ENCODE measurements at regions of chr1 and their contacts with region 1.

Region 1: DNA sequence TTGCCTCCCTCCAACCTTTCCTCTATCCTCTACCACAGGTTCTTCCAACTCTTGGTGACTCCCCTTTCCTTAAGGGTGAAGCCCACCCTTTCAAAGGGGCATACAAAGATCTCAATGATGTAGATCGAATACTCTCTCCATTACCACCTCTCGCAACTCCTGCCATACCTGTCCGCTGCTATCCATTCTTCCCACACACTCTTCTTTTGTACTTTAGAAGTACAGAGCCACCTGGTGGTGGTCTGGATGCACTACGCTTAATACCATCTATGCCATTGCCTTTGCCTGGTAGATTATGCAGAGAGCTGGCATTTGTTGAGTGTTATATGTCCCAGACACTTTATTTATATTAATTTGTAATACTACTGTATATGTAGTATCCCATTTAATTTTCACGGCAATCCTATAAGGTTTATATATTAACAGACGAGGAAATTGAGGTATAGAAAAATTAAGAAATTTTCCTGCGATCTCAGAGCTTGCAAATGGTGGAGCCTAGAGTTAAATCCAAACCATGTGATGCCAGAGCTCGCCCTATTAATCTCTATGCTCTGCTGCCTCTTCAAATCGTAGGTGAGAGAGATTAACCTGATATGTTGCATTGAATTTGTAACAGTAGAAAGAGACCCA is 22.9 kb downstream of the TSHB start:
- DNase-seq: peak; percentile 62
- ATAC-seq: peak; percentile 99
- H3K4me3 ChIP-seq: no peak overlapping the region
- H3K27ac ChIP-seq: no peak overlapping the region
- H3K4me1 ChIP-seq: no peaks in the 10 kb centered on the region
- H3K27me3 ChIP-seq: no peaks in the 10 kb centered on the region
- CTCF ChIP-seq: peak; percentile 61 to 82 (median 80); a peak in 5 of 6 replicates
- POLR2A ChIP-seq: no peak
- RAD21 ChIP-seq: peak; percentile 66

Region 2: GRCh38 chr1:114495486-114495885 is 557.1 kb before region 1 on chr1:
- CTCF ChIA-PET with region 1: no interaction called
- POLR2A ChIA-PET with region 1: no interaction called
- RAD21 ChIA-PET with region 1: no interaction called
- intact Hi-C with region 1: no loop called
- DNase-seq: no peak
- ATAC-seq: no peak
- H3K4me3 ChIP-seq: no peak overlapping the region
- H3K27ac ChIP-seq: no peak overlapping the region
- H3K4me1 ChIP-seq: no peaks in the 10 kb centered on the region
- H3K27me3 ChIP-seq: no peaks in the 10 kb centered on the region
- CTCF ChIP-seq: no peak
- POLR2A ChIP-seq: no peak
- RAD21 ChIP-seq: no peak

Region 3: GRCh38 chr1:115041654-115042053 is 10.9 kb before region 1 on chr1:
- CTCF ChIA-PET with region 1: interaction called, 35 read pairs
- POLR2A ChIA-PET with region 1: interaction called, 3 read pairs
- RAD21 ChIA-PET with region 1: interaction called in 1 of 2 experiments, 6 read pairs
- intact Hi-C with region 1: no loop called
- DNase-seq: peak; percentile 46
- ATAC-seq: peak; percentile 86
- H3K4me3 ChIP-seq: no peak overlapping the region
- H3K27ac ChIP-seq: no peak overlapping the region
- H3K4me1 ChIP-seq: no peaks in the 10 kb centered on the region
- H3K27me3 ChIP-seq: no peaks in the 10 kb centered on the region
- CTCF ChIP-seq: peak; percentile 55 to 62 (median 61); a peak in 5 of 6 replicates
- POLR2A ChIP-seq: no peak
- RAD21 ChIP-seq: peak; percentile 76

Region 4: DNA sequence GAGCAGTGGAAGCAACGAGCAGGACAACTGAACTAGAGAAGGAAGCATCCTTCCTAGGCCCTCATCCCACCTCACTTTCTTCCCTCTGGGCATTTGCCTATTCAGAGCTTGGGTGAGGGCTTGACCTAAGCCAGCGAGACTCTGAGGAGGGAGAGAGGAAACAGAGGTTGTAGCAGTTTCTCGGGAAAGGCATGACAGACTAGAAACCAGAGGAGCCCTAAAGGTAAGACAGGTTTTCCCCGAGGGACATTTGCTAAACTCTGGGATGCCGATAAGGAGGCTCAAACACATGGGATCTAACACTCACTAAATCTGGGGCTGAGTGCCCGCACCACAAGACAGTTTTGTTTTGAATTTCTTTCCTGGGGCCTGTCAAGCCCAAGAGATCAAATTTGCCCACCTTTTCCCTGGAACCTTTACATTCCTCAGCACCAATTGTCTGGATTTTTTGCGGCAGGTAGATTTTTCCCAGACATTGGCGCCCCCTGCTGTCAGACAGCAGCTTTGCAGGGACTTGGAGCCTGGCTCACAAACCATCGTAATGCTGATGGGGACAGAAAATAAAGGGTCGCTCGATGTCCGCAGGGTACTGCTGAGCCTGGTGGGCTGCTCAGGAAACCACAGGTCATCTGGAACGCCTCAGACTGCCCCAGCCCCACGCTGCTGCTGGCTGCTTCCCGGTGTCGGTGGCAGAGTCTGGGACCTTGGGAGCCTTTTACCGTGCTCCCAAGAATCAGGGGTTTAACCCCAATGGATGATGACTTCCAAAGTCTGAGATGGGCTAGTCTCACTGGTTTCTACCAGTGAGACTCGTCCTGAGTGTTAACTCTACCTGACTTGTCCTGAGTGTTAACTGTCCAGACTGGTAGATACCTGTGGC is 60.2 kb after region 1 on chr1:
- CTCF ChIA-PET with region 1: interaction called, 10 read pairs
- POLR2A ChIA-PET with region 1: no interaction called
- RAD21 ChIA-PET with region 1: interaction called in 1 of 2 experiments, 4 read pairs
- intact Hi-C with region 1: no loop called
- DNase-seq: peak; percentile 6
- ATAC-seq: peak; percentile 79
- H3K4me3 ChIP-seq: no peak overlapping the region
- H3K27ac ChIP-seq: no peak overlapping the region
- H3K4me1 ChIP-seq: peaks cover 12 to 30% of the 10 kb centered on the region in 2 experiments; a peak in 3 of 4 replicates
- H3K27me3 ChIP-seq: no peaks in the 10 kb centered on the region
- CTCF ChIP-seq: peak; percentile 61 to 97 (median 95); a peak in 5 of 6 replicates
- POLR2A ChIP-seq: no peak
- RAD21 ChIP-seq: peak; percentile 82

Region 5: GRCh38 chr1:115210302-115210711 is 157.7 kb after region 1 on chr1:
- CTCF ChIA-PET with region 1: no interaction called
- POLR2A ChIA-PET with region 1: no interaction called
- RAD21 ChIA-PET with region 1: no interaction called
- intact Hi-C with region 1: no loop called
- DNase-seq: no peak
- ATAC-seq: no peak
- H3K4me3 ChIP-seq: no peak overlapping the region
- H3K27ac ChIP-seq: no peak overlapping the region
- H3K4me1 ChIP-seq: peaks cover 0 to 6% of the 10 kb centered on the region in 2 experiments; a peak in 1 of 4 replicates
- H3K27me3 ChIP-seq: no peaks in the 10 kb centered on the region
- CTCF ChIP-seq: no peak
- POLR2A ChIP-seq: no peak
- RAD21 ChIP-seq: no peak

Measured in HCT116 (cell line).